Prostate gland (tissue), 2 donors: ENCODE measurements at regions of chr6 and their contacts with region 1.

Region 1: GRCh38 chr6:22471132-22471690 is 98.2 kb upstream of the HDGFL1 start:
- DNase-seq: peak; percentile 80
- H3K4me3 ChIP-seq: no peak overlapping the region
- H3K27ac ChIP-seq: no peak overlapping the region
- H3K4me1 ChIP-seq: peaks cover 12% of the 10 kb centered on the region
- H3K27me3 ChIP-seq: no peaks in the 10 kb centered on the region
- CTCF ChIP-seq: peak in 2 of 4 experiments; percentile 36 to 41
- POLR2A ChIP-seq: no peak

Region 2: DNA sequence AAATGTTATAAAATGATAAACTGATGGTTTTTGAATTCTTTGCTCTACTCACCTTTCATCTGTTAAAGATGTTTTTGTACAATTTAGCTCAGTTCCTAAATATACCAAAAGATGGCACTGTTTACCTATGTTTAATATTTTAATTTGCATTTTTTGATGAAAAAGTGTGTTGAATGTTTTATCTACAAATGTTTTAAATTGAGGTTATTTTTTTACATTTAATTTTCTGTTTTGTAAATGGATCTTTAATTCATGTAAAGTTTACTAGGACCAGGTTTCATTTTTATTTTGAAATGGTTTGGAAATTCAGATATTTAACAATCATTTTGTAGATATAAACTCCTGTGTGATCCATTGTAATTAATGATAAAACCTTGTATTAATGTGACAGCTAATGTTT is 1906.9 kb before region 1 on chr6:
- intact Hi-C with region 1: loop called (anchors 10 kb)
- DNase-seq: no peak
- H3K4me3 ChIP-seq: no peak overlapping the region
- H3K27ac ChIP-seq: no peak overlapping the region
- H3K4me1 ChIP-seq: no peaks in the 10 kb centered on the region
- H3K27me3 ChIP-seq: no peaks in the 10 kb centered on the region
- CTCF ChIP-seq: peak in 3 of 4 experiments; percentile 54 to 64 (median 58)
- POLR2A ChIP-seq: no peak

Region 3: DNA sequence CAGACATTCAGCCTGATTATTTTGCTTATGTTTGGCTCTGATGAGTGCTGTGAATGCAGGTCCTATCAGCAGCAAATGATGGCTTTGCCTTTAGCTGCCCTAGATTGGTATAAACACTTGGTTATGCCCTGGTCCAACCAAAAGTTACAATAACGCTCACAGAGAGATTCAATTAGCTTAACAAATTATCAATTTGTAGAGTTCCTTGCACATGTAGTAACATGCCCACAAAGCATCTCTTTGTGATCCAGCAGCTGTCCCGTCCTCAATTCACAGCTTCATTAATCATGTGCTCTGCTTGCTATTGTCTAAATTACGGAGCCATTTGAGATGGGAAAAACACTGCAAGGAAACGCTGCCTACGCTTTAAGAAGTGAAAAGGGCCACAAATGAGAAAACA is 556.1 kb after region 1 on chr6:
- intact Hi-C with region 1: no loop called
- DNase-seq: no peak
- H3K4me3 ChIP-seq: no peak overlapping the region
- H3K27ac ChIP-seq: no peak overlapping the region
- H3K4me1 ChIP-seq: no peaks in the 10 kb centered on the region
- H3K27me3 ChIP-seq: no peaks in the 10 kb centered on the region
- CTCF ChIP-seq: no peak
- POLR2A ChIP-seq: no peak